ENCODE measurements at regions of chr2 and their contacts with region 1.

Region 1: DNA sequence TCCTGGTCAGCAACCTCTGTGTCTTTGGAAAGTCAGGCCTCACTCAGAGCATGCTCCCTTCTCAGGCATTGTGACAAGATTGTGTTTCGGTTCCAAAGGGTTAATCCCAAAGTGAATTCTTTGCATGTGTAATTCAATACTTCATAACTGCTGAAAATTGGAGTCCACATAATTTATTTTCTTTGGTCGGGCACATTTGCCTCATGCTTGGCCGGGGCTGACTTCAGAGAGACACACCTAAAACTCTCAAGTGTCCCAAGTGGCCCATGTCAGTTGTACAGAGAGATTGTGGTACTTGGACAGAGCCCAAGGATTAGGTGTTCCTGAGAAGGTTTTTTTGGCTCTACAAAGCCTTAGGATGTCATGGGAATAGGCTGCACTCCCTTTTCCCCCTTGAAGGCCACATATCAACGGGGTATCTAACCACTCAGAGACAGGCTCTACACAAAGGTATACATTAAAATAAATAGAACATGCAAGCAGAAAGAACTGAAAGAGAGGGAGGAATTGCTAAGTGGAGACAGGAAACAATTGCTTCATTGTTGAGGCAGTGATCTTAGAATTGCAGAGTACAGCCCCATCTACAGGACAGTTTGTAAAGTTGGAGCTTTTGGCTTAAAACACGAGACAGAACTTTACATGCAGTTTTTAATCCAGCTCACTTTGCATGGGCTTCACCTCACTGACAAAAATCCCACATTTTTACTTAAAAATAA is 1232.3 kb upstream of the ZEB2 start:
- DNase-seq: no peak
- ATAC-seq: peak; percentile 45
- H3K4me3 Mint-ChIP-seq: peak overlapping the region; percentile 37
- H3K27ac Mint-ChIP-seq: peak overlapping the region; percentile 77
- H3K4me1 Mint-ChIP-seq: peaks cover 64% of the 10 kb centered on the region
- H3K27me3 Mint-ChIP-seq: no peaks in the 10 kb centered on the region
- CTCF ChIP-seq: peak; percentile 73

Region 2: DNA sequence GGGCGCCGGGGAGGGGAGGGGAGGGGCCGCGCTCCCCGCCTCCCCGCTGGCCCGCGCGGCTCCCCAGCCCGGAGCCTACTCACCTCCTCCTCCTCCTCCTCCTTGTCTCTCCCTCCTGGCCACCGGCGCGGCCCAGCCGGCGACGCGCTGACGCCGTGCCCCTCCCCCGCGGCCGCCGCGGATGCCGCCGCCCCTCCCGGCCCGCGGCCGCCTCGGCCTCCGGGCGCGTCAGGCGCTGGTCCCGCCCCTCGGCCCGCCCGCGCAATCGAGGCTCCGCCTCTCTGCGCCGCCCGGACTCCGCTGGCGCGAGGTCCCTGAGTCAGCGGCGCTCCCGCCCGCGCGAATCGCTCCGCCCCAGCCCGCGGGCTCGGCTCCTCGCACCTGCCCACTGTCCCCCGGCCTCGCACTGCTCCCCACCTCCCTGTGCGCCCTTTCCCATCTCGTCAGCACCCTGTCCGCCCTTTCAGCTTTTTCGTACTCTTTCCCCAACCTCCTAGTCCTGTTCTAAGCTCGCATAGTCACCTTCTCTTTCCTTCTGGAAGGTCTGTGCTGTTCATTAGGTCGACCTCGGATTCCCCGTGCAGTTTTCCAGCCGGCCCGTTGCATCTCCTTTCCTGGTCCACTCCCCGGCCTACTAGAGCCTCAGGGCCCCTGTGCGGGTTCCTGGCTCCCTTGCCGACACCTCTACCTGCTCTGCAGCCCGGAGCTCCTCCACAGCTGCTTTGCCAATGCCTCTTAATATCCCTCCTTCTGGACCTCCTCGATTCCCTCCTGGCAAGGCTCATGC is 1419.7 kb before region 1 on chr2:
- CTCF ChIA-PET with region 1: no interaction called
- POLR2A ChIA-PET with region 1: no interaction called
- intact Hi-C with region 1: loop called (anchors 2 kb)
- DNase-seq: peak; percentile 93
- ATAC-seq: peak; percentile 91
- H3K4me3 Mint-ChIP-seq: peak overlapping the region; percentile 92
- H3K27ac Mint-ChIP-seq: peak overlapping the region; percentile 87
- H3K4me1 Mint-ChIP-seq: peaks cover 22% of the 10 kb centered on the region
- H3K27me3 Mint-ChIP-seq: no peaks in the 10 kb centered on the region
- CTCF ChIP-seq: no peak

Region 3: DNA sequence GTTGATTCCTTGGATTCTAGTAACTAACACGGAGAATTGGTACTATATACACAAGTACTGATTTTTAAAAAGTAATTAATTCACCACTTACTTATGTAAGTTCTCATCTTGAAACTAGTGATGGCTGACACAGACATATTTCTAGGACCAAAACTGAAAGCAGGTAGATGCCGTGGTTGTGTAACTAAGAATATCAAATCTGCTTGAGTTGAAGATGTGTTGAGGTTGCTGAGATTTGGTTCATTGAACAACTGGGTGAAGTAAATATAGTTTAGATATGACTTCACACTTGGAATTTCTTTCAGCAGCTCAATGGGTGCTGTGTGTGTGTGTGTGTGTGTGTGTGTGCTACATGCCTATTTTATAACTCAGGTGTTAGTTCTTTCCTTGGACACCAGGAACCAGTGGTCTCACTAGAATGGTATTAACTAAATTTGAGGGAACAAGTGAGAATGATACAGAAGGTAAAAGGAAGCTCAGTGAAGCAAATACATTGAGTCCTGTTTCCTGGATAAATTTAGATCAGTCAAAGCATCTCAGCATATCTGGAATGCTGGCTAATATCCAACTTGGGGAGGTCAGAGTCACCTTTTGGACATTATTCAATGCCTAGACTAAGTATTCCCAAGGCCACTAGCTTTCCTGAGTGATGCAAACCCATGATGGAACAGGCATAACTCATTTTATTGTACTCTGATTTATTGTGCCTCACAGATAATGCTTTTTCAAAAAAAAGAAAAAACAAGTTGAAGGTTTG is 1121.6 kb before region 1 on chr2:
- CTCF ChIA-PET with region 1: no interaction called
- POLR2A ChIA-PET with region 1: interaction called, 10 read pairs
- intact Hi-C with region 1: no loop called
- DNase-seq: no peak
- ATAC-seq: peak; percentile 81
- H3K4me3 Mint-ChIP-seq: no peak overlapping the region
- H3K27ac Mint-ChIP-seq: peak overlapping the region; percentile 9
- H3K4me1 Mint-ChIP-seq: peaks cover 16% of the 10 kb centered on the region
- H3K27me3 Mint-ChIP-seq: no peaks in the 10 kb centered on the region
- CTCF ChIP-seq: no peak

Region 4: GRCh38 chr2:145123606-145124005 is 628.6 kb before region 1 on chr2:
- CTCF ChIA-PET with region 1: no interaction called
- POLR2A ChIA-PET with region 1: no interaction called
- intact Hi-C with region 1: loop called (anchors 10 kb)
- DNase-seq: no peak
- ATAC-seq: no peak
- H3K4me3 Mint-ChIP-seq: no peak overlapping the region
- H3K27ac Mint-ChIP-seq: no peak overlapping the region
- H3K4me1 Mint-ChIP-seq: peaks cover 12% of the 10 kb centered on the region
- H3K27me3 Mint-ChIP-seq: no peaks in the 10 kb centered on the region
- CTCF ChIP-seq: no peak

Region 5: DNA sequence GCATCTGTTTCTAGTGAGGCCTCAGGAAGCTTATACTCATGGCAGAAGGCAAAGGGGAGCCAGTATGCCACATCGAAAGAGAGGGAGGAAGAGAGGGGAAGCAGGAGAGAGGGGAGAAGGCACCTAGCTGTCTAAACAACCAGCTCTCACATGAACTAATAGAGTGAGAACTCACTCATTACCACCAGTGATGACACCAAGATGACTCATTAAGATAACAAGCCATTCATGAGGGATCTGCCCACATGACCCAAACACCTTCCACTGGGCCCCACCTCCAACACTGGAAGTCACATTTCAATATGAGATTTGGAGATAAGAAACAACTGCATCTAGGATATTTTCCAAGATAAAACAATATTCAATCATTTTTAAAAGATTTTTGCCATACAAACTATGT is 478.4 kb before region 1 on chr2:
- CTCF ChIA-PET with region 1: no interaction called
- POLR2A ChIA-PET with region 1: no interaction called
- intact Hi-C with region 1: no loop called
- DNase-seq: no peak
- ATAC-seq: no peak
- H3K4me3 Mint-ChIP-seq: no peak overlapping the region
- H3K27ac Mint-ChIP-seq: no peak overlapping the region
- H3K4me1 Mint-ChIP-seq: no peaks in the 10 kb centered on the region
- H3K27me3 Mint-ChIP-seq: no peaks in the 10 kb centered on the region
- CTCF ChIP-seq: no peak

Region 6: GRCh38 chr2:145464866-145465265 is 287.4 kb before region 1 on chr2:
- CTCF ChIA-PET with region 1: no interaction called
- POLR2A ChIA-PET with region 1: no interaction called
- intact Hi-C with region 1: no loop called
- DNase-seq: no peak
- ATAC-seq: no peak
- H3K4me3 Mint-ChIP-seq: no peak overlapping the region
- H3K27ac Mint-ChIP-seq: no peak overlapping the region
- H3K4me1 Mint-ChIP-seq: no peaks in the 10 kb centered on the region
- H3K27me3 Mint-ChIP-seq: no peaks in the 10 kb centered on the region
- CTCF ChIP-seq: no peak

Region 7: DNA sequence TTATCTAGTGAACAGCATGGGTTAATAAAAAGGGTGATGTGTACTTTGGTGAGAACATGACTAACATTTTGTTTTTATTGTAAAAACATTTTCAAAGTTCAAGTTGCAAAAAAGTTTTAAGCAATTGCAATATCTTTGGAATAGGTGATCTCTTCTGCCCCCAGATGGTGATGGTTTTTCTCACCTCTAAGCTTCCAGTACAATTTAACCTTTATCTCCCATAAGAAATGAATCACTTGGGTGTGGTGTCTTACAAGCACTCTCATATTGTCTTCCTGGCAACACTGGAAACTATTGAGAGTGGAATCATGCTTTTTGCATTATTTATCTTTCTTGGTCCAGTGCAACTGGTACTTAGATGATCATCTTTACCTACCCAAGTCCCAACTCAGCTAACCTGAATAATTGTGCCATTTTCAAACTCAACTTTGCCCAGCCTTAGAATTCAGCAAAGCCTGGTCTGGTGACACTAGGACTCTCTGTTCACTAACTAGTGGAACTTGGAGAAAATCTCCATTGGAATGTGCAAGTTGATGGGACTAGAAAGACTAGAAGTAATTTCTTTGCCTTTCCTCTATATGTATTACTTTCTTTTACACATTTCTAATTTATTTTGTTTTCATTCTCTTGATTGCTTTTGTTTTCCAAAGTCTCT is 267.7 kb before region 1 on chr2:
- CTCF ChIA-PET with region 1: interaction called, 8 read pairs
- POLR2A ChIA-PET with region 1: no interaction called
- intact Hi-C with region 1: loop called (anchors 2 kb)
- DNase-seq: no peak
- ATAC-seq: peak; percentile 31
- H3K4me3 Mint-ChIP-seq: no peak overlapping the region
- H3K27ac Mint-ChIP-seq: no peak overlapping the region
- H3K4me1 Mint-ChIP-seq: peaks cover 7% of the 10 kb centered on the region
- H3K27me3 Mint-ChIP-seq: no peaks in the 10 kb centered on the region
- CTCF ChIP-seq: no peak

Region 8: DNA sequence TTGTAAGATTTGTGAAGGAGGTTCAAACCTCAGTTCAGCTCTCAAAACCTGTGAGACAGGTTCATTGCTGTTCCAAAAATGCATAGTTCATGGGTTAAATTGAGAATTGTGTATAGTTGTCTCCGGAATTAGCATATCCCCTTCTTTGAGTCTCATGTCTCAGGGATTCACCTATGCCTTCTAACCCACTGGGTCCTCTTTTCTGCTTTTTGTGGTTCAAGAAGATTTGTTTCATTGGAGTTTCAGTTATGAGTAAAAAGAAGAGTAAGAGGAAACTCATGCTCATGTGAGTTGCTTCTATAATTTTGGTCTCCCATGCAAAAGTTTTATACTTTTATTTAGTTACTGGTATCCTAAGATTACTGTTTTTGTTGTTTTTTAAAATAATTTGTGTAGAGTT is 12.6 kb before region 1 on chr2:
- CTCF ChIA-PET with region 1: interaction called, 7 read pairs
- POLR2A ChIA-PET with region 1: interaction called, 10 read pairs
- intact Hi-C with region 1: loop called (anchors 1 kb)
- DNase-seq: no peak
- ATAC-seq: peak; percentile 15
- H3K4me3 Mint-ChIP-seq: no peak overlapping the region
- H3K27ac Mint-ChIP-seq: peak overlapping the region; percentile 89
- H3K4me1 Mint-ChIP-seq: peaks cover 59% of the 10 kb centered on the region
- H3K27me3 Mint-ChIP-seq: no peaks in the 10 kb centered on the region
- CTCF ChIP-seq: no peak